Caco-2 (cell line): ENCODE measurements at regions of chr12 and their contacts with region 1.

Region 1: DNA sequence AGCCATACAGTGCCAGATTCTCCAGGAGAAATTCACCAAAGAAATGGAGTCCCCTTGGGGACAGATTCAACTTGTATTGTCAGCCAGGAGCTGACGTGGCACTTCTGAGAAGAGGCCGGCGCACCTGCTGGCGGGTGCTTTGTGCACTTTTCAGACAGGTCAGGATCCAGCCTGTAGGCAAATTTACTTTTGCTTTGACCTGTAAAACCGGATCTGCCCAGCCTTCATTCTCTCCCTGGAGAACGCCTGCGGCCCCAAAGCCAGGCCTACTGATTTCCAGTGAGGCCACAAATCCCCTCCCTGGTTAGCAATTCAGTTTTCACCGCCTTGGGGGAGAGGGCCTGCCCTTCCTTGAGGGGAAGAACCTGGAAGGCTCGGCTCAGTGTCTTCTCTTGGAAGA is 17.4 kb downstream of the P2RX4 start:
- DNase-seq: peak; percentile 95 to 96
- H3K4me3 ChIP-seq: no peak overlapping the region
- H3K4me3 Mint-ChIP-seq: peak overlapping the region; percentile 50
- H3K27ac Mint-ChIP-seq: peak overlapping the region; percentile 89
- H3K4me1 ChIP-seq: peaks cover 42% of the 10 kb centered on the region
- H3K4me1 Mint-ChIP-seq: peaks cover 15% of the 10 kb centered on the region
- H3K27me3 ChIP-seq: no peaks in the 10 kb centered on the region
- H3K27me3 Mint-ChIP-seq: no peaks in the 10 kb centered on the region
- CTCF ChIP-seq: peak; percentile 18 to 24

Region 2: GRCh38 chr12:121060149-121061001 is 166.9 kb before region 1 on chr12:
- CTCF ChIA-PET with region 1: no interaction called
- POLR2A ChIA-PET with region 1: no interaction called
- intact Hi-C with region 1: loop called (anchors 5 kb)
- DNase-seq: peak in 1 of 2 experiments; percentile 42
- H3K4me3 ChIP-seq: no peak overlapping the region
- H3K4me3 Mint-ChIP-seq: no peak overlapping the region
- H3K27ac Mint-ChIP-seq: no peak overlapping the region
- H3K4me1 ChIP-seq: no peaks in the 10 kb centered on the region
- H3K4me1 Mint-ChIP-seq: no peaks in the 10 kb centered on the region
- H3K27me3 ChIP-seq: no peaks in the 10 kb centered on the region
- H3K27me3 Mint-ChIP-seq: no peaks in the 10 kb centered on the region
- CTCF ChIP-seq: peak; percentile 43 to 48

Region 3: DNA sequence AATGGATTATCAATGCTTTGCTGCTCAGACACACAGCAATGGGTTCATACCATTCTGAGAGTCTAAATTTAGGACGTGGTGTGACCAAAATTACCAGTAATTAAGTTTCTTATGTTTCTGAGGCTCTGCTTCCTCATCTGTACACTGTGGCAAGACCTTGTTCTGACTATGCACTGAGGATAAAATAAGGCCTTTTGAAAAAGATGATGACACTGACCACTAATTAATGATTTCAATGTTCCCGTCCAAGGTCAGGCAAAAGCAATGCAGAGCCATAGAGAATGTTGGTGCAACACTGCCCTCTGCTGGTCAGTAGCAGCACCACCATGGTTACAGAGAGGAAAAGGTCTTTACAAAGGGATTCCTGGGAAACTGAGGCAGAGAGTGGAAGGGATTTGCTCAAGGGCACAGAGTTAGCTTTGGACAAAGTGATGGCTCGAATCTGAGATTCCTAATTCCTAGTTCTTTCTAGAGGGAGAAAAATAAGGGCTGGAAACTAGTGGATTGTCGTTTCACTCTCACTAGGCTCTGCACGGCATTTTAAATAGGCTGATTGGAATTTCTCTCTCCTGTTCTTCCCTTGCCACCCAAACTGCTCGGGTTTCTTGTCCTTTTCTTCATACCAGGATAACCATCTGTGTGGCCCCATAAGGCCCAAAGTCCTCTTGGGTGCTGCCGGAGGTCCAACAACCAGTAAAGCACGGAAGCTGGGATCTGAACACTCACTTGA is 116.9 kb before region 1 on chr12:
- CTCF ChIA-PET with region 1: no interaction called
- POLR2A ChIA-PET with region 1: no interaction called
- intact Hi-C with region 1: loop called (anchors 5 kb)
- DNase-seq: peak; percentile 67 to 74
- H3K4me3 ChIP-seq: no peak overlapping the region
- H3K4me3 Mint-ChIP-seq: no peak overlapping the region
- H3K27ac Mint-ChIP-seq: no peak overlapping the region
- H3K4me1 ChIP-seq: no peaks in the 10 kb centered on the region
- H3K4me1 Mint-ChIP-seq: peaks cover 6% of the 10 kb centered on the region
- H3K27me3 ChIP-seq: no peaks in the 10 kb centered on the region
- H3K27me3 Mint-ChIP-seq: no peaks in the 10 kb centered on the region
- CTCF ChIP-seq: peak; percentile 84 to 94

Region 4: GRCh38 chr12:121209624-121210572 is 17.4 kb before region 1 on chr12 and contains the start of gene P2RX4:
- CTCF ChIA-PET with region 1: no interaction called
- POLR2A ChIA-PET with region 1: no interaction called
- intact Hi-C with region 1: loop called (anchors 1 kb)
- DNase-seq: peak; percentile 93 to 96
- H3K4me3 ChIP-seq: peak within 1 kb of the TSS; percentile 68
- H3K4me3 Mint-ChIP-seq: peak within 1 kb of the TSS; percentile 88
- H3K27ac Mint-ChIP-seq: peak within 1 kb of the TSS; percentile 96
- H3K4me1 ChIP-seq: peaks cover 17% of the 10 kb centered on the region
- H3K4me1 Mint-ChIP-seq: peaks cover 8% of the 10 kb centered on the region
- H3K27me3 ChIP-seq: no peaks in the 10 kb centered on the region
- H3K27me3 Mint-ChIP-seq: no peaks in the 10 kb centered on the region
- CTCF ChIP-seq: peak in 1 of 2 experiments; percentile 43
- total RNA-seq, gene P2RX4: 40.4 and 44.7 TPM in 2 replicates

Region 5: GRCh38 chr12:121214855-121215745 is 12.2 kb before region 1 on chr12:
- CTCF ChIA-PET with region 1: interaction called, 3 read pairs
- POLR2A ChIA-PET with region 1: interaction called, 3 read pairs
- intact Hi-C with region 1: loop called (anchors 1 kb)
- DNase-seq: peak; percentile 49 to 54
- H3K4me3 ChIP-seq: no peak overlapping the region
- H3K4me3 Mint-ChIP-seq: no peak overlapping the region
- H3K27ac Mint-ChIP-seq: peak overlapping the region; percentile 53
- H3K4me1 ChIP-seq: peaks cover 34% of the 10 kb centered on the region
- H3K4me1 Mint-ChIP-seq: peaks cover 15% of the 10 kb centered on the region
- H3K27me3 ChIP-seq: no peaks in the 10 kb centered on the region
- H3K27me3 Mint-ChIP-seq: no peaks in the 10 kb centered on the region
- CTCF ChIP-seq: no peak

Region 6: DNA sequence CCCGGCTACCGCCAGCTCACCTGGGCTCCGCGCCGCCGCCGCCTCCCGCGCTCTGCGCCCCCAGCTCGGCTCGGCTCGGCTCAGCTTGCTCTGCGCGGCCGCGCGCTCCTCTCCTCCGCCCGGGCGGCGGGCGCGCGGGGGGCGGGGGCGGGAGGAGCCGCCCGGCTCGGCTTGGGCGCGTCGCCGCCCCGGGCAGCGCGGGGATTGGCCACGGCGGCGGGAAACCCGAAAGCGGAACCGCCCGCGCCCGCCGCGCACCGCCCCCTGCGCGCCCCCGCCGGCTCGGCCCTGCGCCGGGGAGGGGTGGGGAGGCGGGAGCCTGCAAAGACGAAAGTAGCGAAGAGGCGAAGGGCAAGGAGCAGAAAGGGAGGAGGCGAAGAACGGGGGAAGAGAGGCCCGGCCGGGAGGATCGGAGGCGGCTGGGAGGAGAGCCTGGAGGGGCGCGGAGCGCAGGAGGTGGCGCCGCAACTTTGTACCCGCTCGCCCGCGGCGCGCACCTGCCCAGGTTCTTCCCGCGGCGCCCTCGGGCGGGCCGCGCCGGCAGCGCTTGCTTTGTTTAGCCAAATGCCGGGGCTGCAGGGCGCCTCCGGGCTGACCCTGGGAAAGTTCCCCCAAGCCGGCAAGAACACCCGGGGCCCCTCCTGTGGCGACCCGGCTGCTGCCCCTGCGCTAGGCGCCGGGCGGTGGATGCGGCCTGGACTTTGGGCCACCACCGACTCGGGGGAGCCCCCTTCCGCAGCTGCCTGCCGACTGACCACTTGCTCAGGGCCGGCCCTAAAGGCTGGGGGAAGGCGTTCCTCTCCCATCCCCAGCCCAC is 69.5 kb after region 1 on chr12 and contains the start of gene CAMKK2:
- CTCF ChIA-PET with region 1: no interaction called
- POLR2A ChIA-PET with region 1: no interaction called
- intact Hi-C with region 1: loop called (anchors 2 kb)
- DNase-seq: peak; percentile 88 to 93
- H3K4me3 ChIP-seq: peak within 1 kb of the TSS; percentile 95
- H3K4me3 Mint-ChIP-seq: peak within 1 kb of the TSS; percentile 79
- H3K27ac Mint-ChIP-seq: peak within 1 kb of the TSS; percentile 72
- H3K4me1 ChIP-seq: no peaks in the 10 kb centered on the region
- H3K4me1 Mint-ChIP-seq: no peaks in the 10 kb centered on the region
- H3K27me3 ChIP-seq: no peaks in the 10 kb centered on the region
- H3K27me3 Mint-ChIP-seq: no peaks in the 10 kb centered on the region
- CTCF ChIP-seq: peak in 1 of 2 experiments; percentile 33
- total RNA-seq, gene CAMKK2: 26.9 and 31.0 TPM in 2 replicates